Dendritic cell treated with granulocyte-macrophage colony-stimulating factor and Interleukin-4, amounts not matched to agents 40 ng/mL and 50 ng/mL, for 4 days (primary cell): ENCODE measurements at regions of chr1 and their contacts with region 1.

Region 1: DNA sequence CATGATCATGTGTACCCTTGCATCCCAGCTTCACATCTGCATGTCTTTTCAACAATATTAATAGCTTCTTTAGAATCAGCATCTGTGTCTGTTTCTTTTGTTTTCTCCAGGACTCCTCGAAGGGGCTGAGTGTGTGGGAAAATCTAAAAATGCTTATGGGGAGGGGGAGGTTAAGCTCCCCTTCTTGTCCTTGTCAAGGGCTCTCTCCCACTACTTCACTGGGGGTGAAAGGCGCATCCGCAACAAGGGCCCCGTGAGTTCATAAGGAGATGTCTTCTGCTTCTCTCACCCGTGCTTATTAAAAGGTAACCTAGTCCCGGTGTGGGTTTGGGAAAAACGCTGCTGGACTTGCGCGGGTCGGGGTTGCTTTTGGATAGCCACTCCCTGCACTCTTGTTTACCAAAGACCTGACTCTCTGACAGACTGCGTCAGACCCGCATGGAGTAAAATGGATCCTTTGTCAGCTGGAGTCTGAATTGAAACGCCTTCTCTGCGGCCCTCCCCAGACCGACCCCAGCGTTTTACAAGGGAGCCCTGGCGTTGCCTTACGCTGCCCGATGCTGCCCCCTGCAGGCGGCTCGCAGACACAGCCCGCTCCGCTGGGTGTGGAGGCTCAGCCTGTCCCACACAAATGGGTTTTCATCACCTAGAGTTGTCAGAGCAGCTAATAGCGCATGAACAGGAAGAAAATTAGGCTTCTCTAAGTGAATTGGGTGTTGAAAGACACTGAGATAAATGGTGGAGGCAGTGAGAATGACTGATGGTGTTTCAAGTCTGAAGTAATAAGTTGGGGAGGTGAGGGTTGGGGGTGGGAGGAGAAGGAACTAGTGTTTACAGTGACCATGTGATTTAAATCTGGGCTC is 53.8 kb downstream of the IER5 start:
- H3K4me3 Mint-ChIP-seq: peak overlapping the region; percentile 45
- H3K27ac Mint-ChIP-seq: peak overlapping the region; percentile 78
- H3K4me1 Mint-ChIP-seq: peaks cover 53% of the 10 kb centered on the region
- H3K27me3 Mint-ChIP-seq: peaks cover 5% of the 10 kb centered on the region

Region 2: GRCh38 chr1:181038399-181038873 is 103.9 kb before region 1 on chr1:
- intact Hi-C with region 1: loop called (anchors 1 kb)
- H3K4me3 Mint-ChIP-seq: no peak overlapping the region
- H3K27ac Mint-ChIP-seq: peak overlapping the region; percentile 35
- H3K4me1 Mint-ChIP-seq: peaks cover 78% of the 10 kb centered on the region
- H3K27me3 Mint-ChIP-seq: no peaks in the 10 kb centered on the region

Region 3: DNA sequence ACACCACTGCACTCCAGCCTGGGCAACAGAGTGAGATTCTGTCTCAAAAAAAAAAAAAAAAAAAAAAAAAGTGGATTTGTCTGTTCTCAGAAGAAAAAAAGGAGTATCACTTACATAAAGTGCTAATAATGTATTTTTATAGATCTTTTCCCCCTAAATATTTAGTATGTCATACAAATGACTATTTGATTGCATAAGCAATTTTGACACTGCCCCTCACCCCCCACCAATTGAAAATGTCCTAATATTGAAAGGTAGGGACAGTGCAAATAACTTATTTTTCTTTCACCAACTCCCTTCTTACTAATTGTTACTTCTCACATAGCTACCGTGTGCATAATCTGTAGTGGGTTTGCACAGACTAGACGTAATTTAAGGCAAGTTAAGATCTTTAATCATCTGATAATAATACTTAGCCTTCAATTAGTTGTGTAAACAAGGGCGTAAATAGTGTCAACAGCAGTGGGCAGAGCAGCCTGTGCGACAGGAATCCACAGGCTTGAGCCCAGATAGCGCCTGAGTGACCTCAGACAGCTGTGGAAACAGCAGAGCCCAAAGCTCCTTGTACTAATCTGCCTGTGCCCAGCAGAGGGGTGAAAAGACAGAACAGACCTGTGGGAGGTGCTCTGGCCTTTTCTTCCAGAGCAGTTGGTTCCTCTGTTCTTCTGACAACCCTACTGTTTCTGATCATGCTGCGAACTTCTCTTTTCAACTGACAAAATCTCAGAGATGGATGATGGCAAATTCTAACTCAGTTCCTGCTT is 58.3 kb before region 1 on chr1:
- intact Hi-C with region 1: loop called (anchors 1 kb)
- H3K4me3 Mint-ChIP-seq: no peak overlapping the region
- H3K27ac Mint-ChIP-seq: peak overlapping the region; percentile 63
- H3K4me1 Mint-ChIP-seq: peaks cover 56% of the 10 kb centered on the region
- H3K27me3 Mint-ChIP-seq: no peaks in the 10 kb centered on the region

Region 4: DNA sequence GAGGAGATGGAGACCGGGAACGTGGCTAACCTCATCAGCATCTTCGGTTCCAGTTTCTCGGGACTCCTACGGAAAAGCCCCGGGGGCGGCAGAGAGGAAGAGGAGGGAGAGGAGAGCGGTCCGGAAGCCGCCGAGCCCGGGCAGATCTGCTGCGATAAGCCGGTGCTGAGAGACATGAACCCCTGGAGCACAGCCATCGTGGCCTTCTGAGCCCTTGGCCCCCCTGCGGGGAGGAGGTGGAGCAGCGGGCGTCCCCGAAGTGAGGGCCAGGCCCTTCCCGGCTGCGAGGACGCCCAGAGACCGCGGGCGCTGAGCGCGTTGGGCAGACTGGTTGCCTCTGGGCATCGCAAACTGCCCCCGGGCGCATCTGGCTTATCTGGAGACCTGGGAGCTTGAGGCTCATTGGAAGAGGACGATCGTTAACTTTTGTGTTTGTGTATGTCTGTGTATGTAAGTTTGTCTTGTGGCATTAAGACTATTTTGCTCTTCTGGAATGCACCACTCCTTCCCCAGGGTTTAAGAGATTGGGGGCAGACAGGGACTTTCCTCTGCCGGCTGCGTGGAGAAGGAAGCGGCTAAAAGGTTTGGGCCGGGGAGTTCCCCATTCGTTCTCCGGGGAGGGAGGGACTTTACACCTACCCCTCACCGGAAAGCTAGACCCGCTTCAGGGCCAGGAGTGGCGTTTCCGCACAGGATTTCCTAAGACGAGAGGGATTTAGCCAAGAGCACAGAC is 52.5 kb before region 1 on chr1:
- intact Hi-C with region 1: loop called (anchors 1 kb)
- H3K4me3 Mint-ChIP-seq: peak overlapping the region; percentile 80
- H3K27ac Mint-ChIP-seq: peak overlapping the region; percentile 93
- H3K4me1 Mint-ChIP-seq: peaks cover 70% of the 10 kb centered on the region
- H3K27me3 Mint-ChIP-seq: no peaks in the 10 kb centered on the region

Region 5: GRCh38 chr1:181124291-181124751 is 18.0 kb before region 1 on chr1:
- intact Hi-C with region 1: loop called (anchors 2 kb)
- H3K4me3 Mint-ChIP-seq: no peak overlapping the region
- H3K27ac Mint-ChIP-seq: peak overlapping the region; percentile 84
- H3K4me1 Mint-ChIP-seq: peaks cover 84% of the 10 kb centered on the region
- H3K27me3 Mint-ChIP-seq: peaks cover 2% of the 10 kb centered on the region